ENCODE measurements at regions of chr9 and their contacts with region 1.

Region 1: GRCh38 chr9:36995927-36996705 is 38.0 kb downstream of the PAX5 start:
- DNase-seq: peak; percentile 68 to 91
- H3K4me3 ChIP-seq: peak overlapping the region in 1 of 4 experiments; percentile 37; a peak in 3 of 8 replicates
- H3K27ac ChIP-seq: no peak overlapping the region
- H3K4me1 ChIP-seq: peaks cover 0 to 10% (median 3%) of the 10 kb centered on the region in 4 experiments; a peak in 4 of 7 replicates
- H3K27me3 ChIP-seq: peaks cover 0 to 20% (median 19%) of the 10 kb centered on the region in 4 experiments; a peak in 6 of 7 replicates
- CTCF ChIP-seq: peak; percentile 88 to 93 (median 92)
- EP300 ChIP-seq: no peak; a peak in 1 of 3 replicates
- POLR2A ChIP-seq: no peak
- RAD21 ChIP-seq: peak; percentile 94 to 96

Region 2: GRCh38 chr9:36759141-36759540 is 237.0 kb before region 1 on chr9:
- CTCF ChIA-PET with region 1: no interaction called
- POLR2A ChIA-PET with region 1: no interaction called
- DNase-seq: no peak
- H3K4me3 ChIP-seq: no peak overlapping the region
- H3K27ac ChIP-seq: no peak overlapping the region
- H3K4me1 ChIP-seq: peaks cover 0 to 2% (median under 1%) of the 10 kb centered on the region in 4 experiments; a peak in 4 of 7 replicates
- H3K27me3 ChIP-seq: peaks cover 0 to 2% (median 0%) of the 10 kb centered on the region in 4 experiments; a peak in 3 of 7 replicates
- CTCF ChIP-seq: no peak
- EP300 ChIP-seq: no peak
- POLR2A ChIP-seq: no peak
- RAD21 ChIP-seq: no peak

Region 3: DNA sequence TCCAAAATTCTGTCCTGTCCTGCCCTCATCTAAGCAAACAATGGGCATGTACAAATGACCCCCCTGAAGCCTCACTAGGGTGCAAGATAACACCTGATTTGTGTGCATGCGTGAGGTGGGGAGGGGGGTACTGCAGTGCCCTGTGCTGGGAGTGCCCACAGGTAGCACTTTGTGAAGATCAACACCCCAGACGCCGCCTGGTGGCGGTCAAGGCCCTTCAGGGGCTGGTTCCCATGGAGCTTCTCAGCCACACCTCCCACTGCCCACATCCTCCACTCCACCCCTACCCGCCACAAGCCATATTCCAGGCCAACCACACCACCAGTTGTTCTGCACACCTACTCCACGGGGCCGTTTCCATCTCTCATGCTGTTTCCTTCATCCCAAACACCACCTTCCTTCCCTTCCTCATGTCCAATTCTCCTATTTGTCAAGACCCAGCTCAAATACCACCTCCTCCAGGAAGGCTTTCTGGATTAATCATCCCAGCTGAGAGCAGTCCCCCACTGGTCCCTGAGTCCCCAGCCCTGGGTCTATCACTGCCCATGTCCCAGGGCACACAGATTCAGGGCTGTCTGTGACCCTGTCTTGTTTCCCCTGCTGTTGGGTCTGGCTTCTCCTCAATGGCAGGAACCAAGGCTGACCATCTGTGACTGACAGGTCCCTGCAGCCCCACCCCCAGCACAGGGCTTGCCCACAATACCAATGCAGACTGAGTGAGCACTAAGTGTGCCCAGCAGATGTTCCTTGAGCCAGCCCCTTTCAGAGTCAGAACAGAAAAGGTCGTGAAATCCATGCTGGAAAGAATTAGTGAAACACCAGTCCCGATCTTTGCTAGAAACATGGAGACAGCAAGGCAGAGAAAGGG is 140.4 kb before region 1 on chr9:
- CTCF ChIA-PET with region 1: interaction called, 657 read pairs
- POLR2A ChIA-PET with region 1: no interaction called
- DNase-seq: peak in 1 of 2 experiments; percentile 76
- H3K4me3 ChIP-seq: no peak overlapping the region
- H3K27ac ChIP-seq: no peak overlapping the region
- H3K4me1 ChIP-seq: peaks cover 0 to 7% (median 1%) of the 10 kb centered on the region in 4 experiments; a peak in 4 of 7 replicates
- H3K27me3 ChIP-seq: no peaks in the 10 kb centered on the region
- CTCF ChIP-seq: peak; percentile 75
- EP300 ChIP-seq: no peak
- POLR2A ChIP-seq: no peak
- RAD21 ChIP-seq: peak; percentile 60 to 68

Region 4: DNA sequence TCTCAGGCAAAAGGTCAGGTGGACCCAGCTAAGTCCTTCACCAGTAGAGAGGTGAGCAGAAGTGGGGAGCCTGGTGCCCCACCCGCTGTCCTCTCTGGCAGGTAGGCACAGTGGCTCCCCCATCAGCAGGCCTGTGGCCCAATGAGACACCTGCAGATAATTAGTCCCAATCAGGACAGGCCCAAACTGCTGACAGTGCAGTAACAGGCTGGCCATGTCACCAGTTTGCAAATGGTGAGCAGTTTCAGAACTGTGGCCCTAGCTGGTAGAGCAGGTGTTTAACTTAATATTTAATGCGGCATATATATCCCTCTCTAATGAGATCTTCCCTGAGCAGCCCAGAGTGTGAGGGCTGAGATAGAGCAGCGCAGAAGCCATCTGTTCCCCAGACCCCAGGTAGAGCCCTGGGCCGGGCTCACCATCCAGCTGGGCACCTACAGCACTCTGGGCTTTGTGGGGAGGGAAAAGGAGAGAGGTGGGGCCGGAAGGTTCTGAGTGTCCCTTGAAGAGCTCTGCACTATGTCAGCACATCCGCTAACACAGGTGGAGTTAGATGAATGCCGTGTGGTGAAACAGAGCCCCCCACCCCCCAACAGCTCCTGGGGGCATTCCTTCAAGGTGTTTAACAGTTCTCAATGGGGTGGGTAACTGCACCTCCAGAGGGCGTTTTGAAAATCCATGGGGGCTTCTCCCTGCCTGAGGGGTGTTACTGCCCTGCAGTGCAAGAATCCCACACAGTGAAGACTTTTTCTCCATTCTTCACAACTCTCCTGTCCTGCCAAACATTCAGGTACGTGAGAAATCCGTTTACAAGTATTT is 82.5 kb before region 1 on chr9:
- CTCF ChIA-PET with region 1: interaction called, 37 read pairs
- POLR2A ChIA-PET with region 1: no interaction called
- DNase-seq: no peak
- H3K4me3 ChIP-seq: no peak overlapping the region
- H3K27ac ChIP-seq: no peak overlapping the region
- H3K4me1 ChIP-seq: peaks cover 3 to 7% (median 4%) of the 10 kb centered on the region in 4 experiments
- H3K27me3 ChIP-seq: no peaks in the 10 kb centered on the region
- CTCF ChIP-seq: peak; percentile 38 to 54 (median 41)
- EP300 ChIP-seq: no peak
- POLR2A ChIP-seq: no peak
- RAD21 ChIP-seq: peak in 1 of 2 experiments; percentile 23; a peak in 1 of 4 replicates

Region 5: DNA sequence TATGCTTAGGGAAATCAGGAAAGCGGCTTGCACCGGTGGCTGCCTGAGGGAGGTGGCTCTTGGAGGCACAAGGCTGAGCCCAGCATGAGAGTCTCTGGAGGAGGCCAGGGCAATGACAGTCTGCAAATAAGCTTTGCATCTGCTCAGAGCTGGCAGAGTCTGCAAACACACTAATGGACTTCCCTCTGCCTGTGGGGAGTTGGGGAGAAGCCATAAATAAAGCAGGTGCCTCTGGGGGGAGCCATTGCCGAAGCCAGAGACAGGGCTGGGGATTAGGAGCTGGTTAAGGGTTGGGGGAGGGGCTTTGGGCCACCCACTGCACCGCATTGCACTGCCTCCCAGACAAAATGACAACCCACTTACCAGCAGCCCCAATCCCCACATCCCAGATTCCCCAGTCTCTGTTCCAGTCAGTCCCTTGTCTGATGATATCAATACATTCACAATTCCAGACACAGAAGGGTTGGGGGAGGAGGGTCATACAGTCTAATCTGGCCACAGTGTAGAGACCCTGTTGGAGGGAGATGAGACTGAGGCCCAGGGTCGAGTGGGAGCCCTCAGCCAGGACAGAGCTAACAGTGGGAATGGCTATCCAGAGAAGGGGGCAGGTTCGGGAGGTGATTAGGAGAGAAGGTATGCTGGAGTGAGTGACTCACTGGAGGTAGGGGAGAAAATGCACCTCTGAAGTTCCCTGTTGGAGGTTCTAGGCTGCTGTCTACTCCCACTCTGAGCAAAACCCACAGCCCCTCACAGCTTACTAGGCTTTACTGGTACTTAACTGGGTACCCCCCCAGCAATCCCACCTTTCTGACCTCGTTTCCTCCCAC is 15.8 kb before region 1 on chr9:
- CTCF ChIA-PET with region 1: interaction called, 56 read pairs
- POLR2A ChIA-PET with region 1: no interaction called
- DNase-seq: peak; percentile 53 to 74
- H3K4me3 ChIP-seq: no peak overlapping the region; a peak in 1 of 8 replicates
- H3K27ac ChIP-seq: no peak overlapping the region
- H3K4me1 ChIP-seq: peaks cover 0 to 14% (median 5%) of the 10 kb centered on the region in 4 experiments; a peak in 4 of 7 replicates
- H3K27me3 ChIP-seq: peaks cover 15 to 34% (median 32%) of the 10 kb centered on the region in 4 experiments
- CTCF ChIP-seq: peak; percentile 50 to 63 (median 61)
- EP300 ChIP-seq: no peak
- POLR2A ChIP-seq: no peak
- RAD21 ChIP-seq: peak; percentile 62 to 76

Region 6: DNA sequence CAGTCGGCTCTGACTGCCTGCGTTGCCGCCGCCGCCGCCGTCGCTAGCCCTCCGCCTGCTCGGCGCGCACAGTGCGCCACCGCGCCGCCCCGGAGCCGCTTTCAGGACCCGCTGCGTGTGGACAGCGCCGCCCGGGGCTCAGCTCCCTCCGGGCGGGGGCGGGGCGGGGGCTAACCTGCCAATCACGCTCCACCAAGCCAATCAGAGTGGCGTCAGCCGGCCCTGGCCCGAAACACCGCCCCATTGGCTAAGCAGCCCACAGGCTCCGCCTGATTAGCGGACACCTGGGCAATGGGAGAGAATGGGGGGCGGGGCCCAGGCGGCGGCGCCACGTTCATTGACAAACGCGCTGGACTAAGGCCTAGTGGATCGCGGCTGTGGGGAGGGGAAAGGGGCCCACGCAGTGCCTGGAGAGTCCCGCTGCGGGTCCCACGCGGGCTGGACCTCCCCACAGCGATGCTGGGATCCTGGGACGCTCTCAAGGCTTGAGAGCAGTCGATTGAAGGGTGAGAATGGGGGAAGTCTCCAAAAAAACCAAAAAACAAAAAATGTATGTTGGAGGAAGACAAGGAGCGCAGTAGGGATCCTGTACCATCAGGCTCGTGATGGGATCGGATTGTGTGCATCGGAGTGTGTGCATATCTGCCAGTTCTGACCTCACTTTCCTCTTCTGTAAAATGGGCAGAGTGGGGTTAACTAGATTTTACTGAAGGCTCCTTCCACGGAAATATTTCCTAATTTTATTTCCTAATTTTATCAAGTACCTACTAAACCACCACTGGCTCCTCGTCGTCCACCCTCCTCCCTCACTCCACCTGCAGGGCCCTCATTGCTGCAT is 31.7 kb after region 1 on chr9:
- CTCF ChIA-PET with region 1: interaction called, 12 read pairs
- POLR2A ChIA-PET with region 1: interaction called, 3 read pairs
- DNase-seq: peak; percentile 88 to 97
- H3K4me3 ChIP-seq: peak overlapping the region; percentile 28 to 63 (median 46); a peak in 7 of 8 replicates
- H3K27ac ChIP-seq: no peak overlapping the region
- H3K4me1 ChIP-seq: peaks cover 0 to 47% (median 19%) of the 10 kb centered on the region in 4 experiments; a peak in 5 of 7 replicates
- H3K27me3 ChIP-seq: peaks cover 92 to 98% (median 98%) of the 10 kb centered on the region in 4 experiments
- CTCF ChIP-seq: no peak
- EP300 ChIP-seq: peak in 1 of 2 experiments; percentile 73; a peak in 1 of 3 replicates
- POLR2A ChIP-seq: no peak
- RAD21 ChIP-seq: no peak; a peak in 1 of 4 replicates

Region 7: GRCh38 chr9:37174247-37174646 is 178.1 kb after region 1 on chr9:
- CTCF ChIA-PET with region 1: no interaction called
- POLR2A ChIA-PET with region 1: no interaction called
- DNase-seq: no peak
- H3K4me3 ChIP-seq: no peak overlapping the region
- H3K27ac ChIP-seq: no peak overlapping the region
- H3K4me1 ChIP-seq: no peaks in the 10 kb centered on the region
- H3K27me3 ChIP-seq: no peaks in the 10 kb centered on the region
- CTCF ChIP-seq: no peak
- EP300 ChIP-seq: no peak
- POLR2A ChIP-seq: no peak
- RAD21 ChIP-seq: no peak

Region 8: DNA sequence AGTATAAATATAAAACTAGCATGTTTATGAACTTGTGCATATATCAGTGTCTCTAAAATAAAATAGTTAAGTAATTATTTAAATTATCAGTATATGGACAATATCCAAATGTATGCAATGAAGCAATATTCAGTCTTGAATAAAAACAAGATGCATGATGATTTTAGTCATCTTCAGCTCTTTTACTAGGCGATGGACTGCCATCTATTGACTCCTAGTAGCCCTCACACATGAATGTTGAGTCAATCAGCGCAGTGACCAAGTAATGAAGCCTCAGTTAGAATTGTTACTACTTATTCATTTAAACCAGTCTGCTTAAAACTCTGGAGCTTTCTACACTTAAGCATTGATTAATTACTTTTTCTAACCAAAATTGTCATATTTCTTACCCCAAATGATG is 333.5 kb after region 1 on chr9:
- CTCF ChIA-PET with region 1: interaction called, 13 read pairs
- POLR2A ChIA-PET with region 1: no interaction called
- DNase-seq: no peak
- H3K4me3 ChIP-seq: no peak overlapping the region
- H3K27ac ChIP-seq: no peak overlapping the region
- H3K4me1 ChIP-seq: no peaks in the 10 kb centered on the region
- H3K27me3 ChIP-seq: no peaks in the 10 kb centered on the region
- CTCF ChIP-seq: peak in 1 of 3 experiments; percentile 33; a peak in 2 of 4 replicates
- EP300 ChIP-seq: no peak
- POLR2A ChIP-seq: no peak
- RAD21 ChIP-seq: peak; percentile 59 to 64